ENCODE measurements at regions of chr20 and their contacts with region 1.

Region 1: DNA sequence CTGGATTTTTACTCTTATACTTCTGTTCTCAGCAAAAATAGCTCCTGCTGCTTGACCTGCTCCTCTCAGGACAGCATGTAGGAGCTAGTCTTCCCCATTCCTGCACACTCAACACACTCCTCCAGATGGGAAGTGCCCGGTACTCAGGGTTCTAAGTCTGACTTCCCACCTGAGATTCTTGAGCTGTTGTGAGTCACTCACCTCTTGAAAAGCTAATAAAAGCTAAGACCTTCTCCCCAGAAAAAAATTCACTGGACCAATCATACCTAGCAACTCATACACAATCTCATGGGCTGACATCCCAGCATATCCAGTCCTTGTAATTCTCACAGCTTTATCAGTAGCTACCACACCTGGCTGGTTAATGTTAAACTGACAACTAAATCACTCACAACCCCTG is 53.5 kb downstream of the TRPC4AP start:
- DNase-seq: no peak
- H3K4me3 ChIP-seq: no peak overlapping the region
- H3K27ac ChIP-seq: no peak overlapping the region
- H3K27me3 ChIP-seq: no peaks in the 10 kb centered on the region
- CTCF ChIP-seq: no peak

Region 2: GRCh38 chr20:35055445-35056276 is 16.5 kb after region 1 on chr20:
- CTCF ChIA-PET with region 1: no interaction called
- POLR2A ChIA-PET with region 1: no interaction called
- DNase-seq: no peak
- H3K4me3 ChIP-seq: no peak overlapping the region
- H3K27ac ChIP-seq: no peak overlapping the region
- H3K27me3 ChIP-seq: no peaks in the 10 kb centered on the region
- CTCF ChIP-seq: no peak

Region 3: GRCh38 chr20:35108925-35109324 is 69.8 kb after region 1 on chr20:
- CTCF ChIA-PET with region 1: no interaction called
- POLR2A ChIA-PET with region 1: no interaction called
- DNase-seq: no peak
- H3K4me3 ChIP-seq: no peak overlapping the region
- H3K27ac ChIP-seq: no peak overlapping the region
- H3K27me3 ChIP-seq: no peaks in the 10 kb centered on the region
- CTCF ChIP-seq: no peak

Region 4: DNA sequence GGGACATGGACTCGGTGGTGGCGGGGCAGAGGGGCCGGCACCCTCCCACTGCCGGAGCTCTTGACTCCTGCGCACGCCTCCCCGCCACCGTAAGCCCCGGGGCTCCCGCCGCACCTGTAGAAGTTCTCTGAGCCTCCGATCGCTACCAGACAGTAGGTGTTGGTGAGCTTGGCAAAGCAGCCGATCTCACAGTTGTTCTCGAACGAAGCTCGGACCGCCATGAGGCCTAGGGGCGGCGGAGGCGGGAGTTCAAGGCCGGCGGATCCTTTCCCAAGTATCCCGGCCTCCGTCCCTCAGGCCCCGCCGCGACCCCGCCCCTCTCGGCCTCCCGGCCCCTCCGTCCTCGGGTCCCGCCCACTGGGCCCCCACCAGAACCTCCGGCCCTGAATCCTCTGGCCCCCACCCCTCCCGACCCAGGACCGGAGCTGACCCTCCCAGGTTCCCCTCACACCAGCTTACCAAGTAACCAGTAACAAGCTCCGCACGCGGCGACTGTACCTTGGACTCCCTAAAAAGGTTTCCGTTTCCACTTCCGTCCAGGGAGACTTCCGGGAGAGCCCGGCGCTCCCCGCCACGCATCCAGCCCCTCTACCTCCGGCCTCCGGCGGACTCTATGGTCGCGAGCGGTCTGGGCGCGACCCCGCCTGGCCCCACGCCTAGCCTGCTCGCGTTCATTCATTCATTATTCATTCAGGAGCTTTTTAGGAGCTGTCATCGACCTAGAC is 245.3 kb after region 1 on chr20 and contains the start of gene EIF6:
- CTCF ChIA-PET with region 1: no interaction called
- POLR2A ChIA-PET with region 1: no interaction called
- DNase-seq: peak; percentile 55
- H3K4me3 ChIP-seq: peak within 1 kb of the TSS; percentile 95
- H3K27ac ChIP-seq: peak within 1 kb of the TSS; percentile 75
- H3K27me3 ChIP-seq: no peaks in the 10 kb centered on the region
- CTCF ChIP-seq: no peak
- polyA plus RNA-seq, gene EIF6: 133 and 157 TPM in 2 replicates

Region 5: GRCh38 chr20:35297155-35297554 is 258.0 kb after region 1 on chr20:
- CTCF ChIA-PET with region 1: no interaction called
- POLR2A ChIA-PET with region 1: interaction called, 10 read pairs
- DNase-seq: no peak
- H3K4me3 ChIP-seq: no peak overlapping the region
- H3K27ac ChIP-seq: no peak overlapping the region
- H3K27me3 ChIP-seq: no peaks in the 10 kb centered on the region
- CTCF ChIP-seq: no peak